Activated CD8-positive, alpha-beta T cell treated with anti-CD3 and anti-CD28 coated beads, Interleukin-2, amount 10 ng/mL, durations not matched to agents 7 days and 5 days (primary cell): ENCODE measurements at regions of chr11 and their contacts with region 1.

Region 1: GRCh38 chr11:87081358-87081757 is 43.6 kb downstream of the TMEM135 start:
- DNase-seq: no peak
- ATAC-seq: peak; percentile 60
- H3K4me3 Mint-ChIP-seq: peak overlapping the region; percentile 77
- H3K27ac Mint-ChIP-seq: peak overlapping the region; percentile 90
- H3K4me1 Mint-ChIP-seq: peaks cover 24% of the 10 kb centered on the region
- H3K27me3 Mint-ChIP-seq: no peaks in the 10 kb centered on the region

Region 2: GRCh38 chr11:87007963-87008362 is 73.4 kb before region 1 on chr11:
- CTCF ChIA-PET with region 1: no interaction called
- POLR2A ChIA-PET with region 1: no interaction called
- DNase-seq: no peak
- ATAC-seq: no peak
- H3K4me3 Mint-ChIP-seq: no peak overlapping the region
- H3K27ac Mint-ChIP-seq: no peak overlapping the region
- H3K4me1 Mint-ChIP-seq: no peaks in the 10 kb centered on the region
- H3K27me3 Mint-ChIP-seq: peaks cover 4% of the 10 kb centered on the region

Region 3: DNA sequence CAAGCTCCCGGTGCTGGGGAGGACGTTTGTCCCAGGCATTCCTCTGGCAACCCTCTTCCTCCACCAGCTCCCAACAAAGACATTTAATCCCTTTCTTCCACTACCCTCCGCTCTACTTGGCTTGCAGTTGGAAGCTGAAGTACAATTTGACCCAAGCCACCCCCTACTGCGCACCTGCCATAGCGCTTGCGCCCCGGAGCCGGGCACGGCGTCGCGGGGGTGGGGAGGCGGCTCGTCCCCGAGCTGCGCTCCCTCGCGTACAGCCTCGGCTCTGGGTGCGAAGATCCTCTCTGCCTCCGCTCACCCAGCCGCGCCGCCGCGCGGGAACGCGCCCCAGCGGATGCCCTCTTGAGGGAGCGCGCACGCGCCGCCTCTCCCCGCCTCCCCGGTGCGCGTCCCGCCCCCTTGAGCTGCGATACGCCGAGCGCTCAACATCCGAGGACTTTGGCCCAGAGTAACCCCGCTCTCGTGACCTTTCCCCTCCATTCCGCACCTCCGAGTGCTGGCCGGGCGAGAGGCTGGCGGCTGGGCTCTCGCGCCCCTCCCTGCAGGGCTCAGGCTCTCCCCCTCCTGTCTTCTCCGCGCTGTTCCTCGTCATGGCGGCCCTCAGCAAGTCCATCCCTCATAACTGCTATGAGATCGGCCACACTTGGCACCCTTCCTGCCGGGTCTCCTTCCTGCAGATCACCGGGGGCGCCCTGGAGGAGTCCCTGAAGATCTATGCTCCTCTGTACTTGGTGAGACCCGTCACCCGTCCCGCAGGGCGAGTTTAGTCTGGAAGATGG is 43.7 kb before region 1 on chr11 and contains the start of gene TMEM135:
- CTCF ChIA-PET with region 1: interaction called, 10 read pairs
- POLR2A ChIA-PET with region 1: interaction called, 6 read pairs
- DNase-seq: peak; percentile 97
- ATAC-seq: peak; percentile 98
- H3K4me3 Mint-ChIP-seq: peak within 1 kb of the TSS; percentile 96
- H3K27ac Mint-ChIP-seq: peak within 1 kb of the TSS; percentile 94
- H3K4me1 Mint-ChIP-seq: peaks cover 37% of the 10 kb centered on the region
- H3K27me3 Mint-ChIP-seq: peaks cover 11% of the 10 kb centered on the region
- total RNA-seq, gene TMEM135: 37.2 to 39.8 TPM

Region 4: DNA sequence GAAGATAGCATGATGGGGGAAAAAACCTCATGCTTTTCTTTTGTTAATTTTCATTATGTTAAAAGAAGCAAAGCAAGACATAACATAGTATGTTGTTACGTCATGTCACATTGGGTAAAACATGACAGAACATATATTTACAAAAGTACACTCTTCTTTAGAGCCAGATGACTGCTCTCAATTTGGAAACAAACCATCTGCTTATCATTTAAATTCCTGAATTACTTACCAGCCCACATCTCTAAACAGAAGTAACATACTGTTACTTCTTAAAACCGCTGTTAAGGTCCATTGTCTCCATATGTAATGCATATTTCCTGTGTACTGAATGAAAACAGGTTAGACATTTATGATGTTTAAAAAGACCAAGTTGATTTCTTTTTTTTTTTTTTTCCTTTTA is 56.4 kb after region 1 on chr11:
- CTCF ChIA-PET with region 1: no interaction called
- POLR2A ChIA-PET with region 1: no interaction called
- DNase-seq: no peak
- ATAC-seq: no peak
- H3K4me3 Mint-ChIP-seq: no peak overlapping the region
- H3K27ac Mint-ChIP-seq: no peak overlapping the region
- H3K4me1 Mint-ChIP-seq: peaks cover 1% of the 10 kb centered on the region
- H3K27me3 Mint-ChIP-seq: no peaks in the 10 kb centered on the region